ENCODE measurements at regions of chr10 and their contacts with region 1.

Region 1: DNA sequence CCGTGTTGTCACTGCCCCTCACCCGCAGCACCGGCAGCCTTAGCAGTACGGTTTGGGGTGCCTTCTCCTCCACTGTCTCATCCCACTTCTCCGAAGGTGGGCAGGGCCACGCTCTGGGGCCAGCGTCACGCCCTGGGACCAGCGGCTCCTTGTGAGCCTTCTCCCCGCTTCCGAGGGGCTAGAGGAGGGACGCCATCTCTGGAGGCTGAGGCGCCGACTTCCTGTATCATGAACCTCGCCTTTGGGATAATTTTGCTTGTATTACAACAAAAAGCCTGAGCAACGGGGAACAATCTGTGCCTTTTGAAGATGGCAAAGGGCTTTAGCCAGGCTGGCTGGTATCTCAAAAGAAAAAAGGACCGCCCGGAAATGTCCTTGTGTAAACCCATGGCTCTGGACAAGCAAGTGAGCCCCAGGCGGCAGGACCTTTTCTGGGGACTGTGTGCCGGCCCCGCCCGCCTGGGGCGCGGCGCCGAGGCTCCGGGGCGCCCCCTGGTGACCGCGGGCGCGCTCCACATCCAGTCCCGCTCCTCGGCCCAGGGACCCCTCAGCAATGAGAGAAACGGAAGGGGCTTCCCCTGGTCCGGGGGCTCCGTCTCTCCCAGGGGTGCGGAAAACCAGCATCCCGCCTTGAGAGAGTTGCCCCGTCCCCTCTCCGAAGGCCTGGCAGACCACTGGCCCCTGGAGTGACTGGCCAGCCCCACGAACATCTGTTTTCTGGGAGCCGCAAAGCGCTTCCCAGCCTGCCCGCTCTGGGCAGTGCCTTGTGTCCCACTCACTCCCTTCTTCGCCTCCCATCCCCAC is 3.8 kb downstream of the DEPP1 start:
- DNase-seq: peak; percentile 63
- H3K4me3 Mint-ChIP-seq: peak overlapping the region; percentile 64
- H3K27ac Mint-ChIP-seq: peak overlapping the region; percentile 80
- H3K4me1 Mint-ChIP-seq: peaks cover 15% of the 10 kb centered on the region
- H3K27me3 Mint-ChIP-seq: no peaks in the 10 kb centered on the region

Region 2: DNA sequence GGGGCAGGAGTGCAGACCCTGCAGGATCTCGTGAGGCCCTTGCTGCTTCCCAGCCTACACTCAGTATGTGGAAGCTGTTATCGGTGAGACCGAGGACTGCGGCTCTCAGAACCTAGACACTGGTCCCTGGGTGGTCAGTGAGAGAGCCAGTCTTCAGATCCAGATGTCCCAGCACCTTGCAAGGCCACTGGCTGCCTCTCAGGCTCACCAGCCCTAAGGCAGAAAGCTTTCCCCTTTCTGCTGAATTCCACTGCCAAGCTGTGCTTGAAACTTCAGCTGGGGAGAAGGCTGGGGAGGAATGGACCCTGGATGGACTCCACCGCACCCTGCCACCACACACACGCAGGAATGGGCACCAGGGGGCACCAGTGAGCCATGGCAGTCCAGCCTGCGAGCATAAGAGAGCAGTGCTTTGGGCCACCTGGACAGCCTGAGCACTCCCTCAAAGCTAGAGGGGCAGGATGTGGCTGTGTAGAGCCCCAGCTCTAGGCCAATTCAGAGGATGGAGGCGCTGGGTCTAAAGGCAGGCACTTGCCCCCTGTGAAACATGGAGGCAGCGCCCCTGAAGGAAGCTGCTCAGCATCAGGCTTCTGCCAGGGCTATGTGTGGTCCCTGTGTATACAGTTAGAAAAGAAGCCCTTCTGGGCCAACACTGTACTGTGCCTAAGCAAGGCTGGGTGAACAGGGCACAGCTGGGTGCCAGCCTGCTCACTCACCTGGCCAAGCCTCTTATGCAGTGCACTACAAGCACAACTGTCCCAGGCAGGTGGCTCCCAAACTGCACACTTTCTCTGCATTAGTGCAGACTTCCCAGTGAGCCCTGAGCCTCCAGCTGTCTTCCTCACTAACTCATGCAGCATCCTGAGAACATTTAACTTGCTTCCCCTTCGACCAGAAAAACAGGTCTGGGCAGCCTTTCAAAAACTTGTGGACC is 42.0 kb before region 1 on chr10:
- intact Hi-C with region 1: loop called (anchors 1 kb)
- DNase-seq: peak; percentile 74
- H3K4me3 Mint-ChIP-seq: no peak overlapping the region
- H3K27ac Mint-ChIP-seq: no peak overlapping the region
- H3K4me1 Mint-ChIP-seq: peaks cover 8% of the 10 kb centered on the region
- H3K27me3 Mint-ChIP-seq: no peaks in the 10 kb centered on the region

Region 3: DNA sequence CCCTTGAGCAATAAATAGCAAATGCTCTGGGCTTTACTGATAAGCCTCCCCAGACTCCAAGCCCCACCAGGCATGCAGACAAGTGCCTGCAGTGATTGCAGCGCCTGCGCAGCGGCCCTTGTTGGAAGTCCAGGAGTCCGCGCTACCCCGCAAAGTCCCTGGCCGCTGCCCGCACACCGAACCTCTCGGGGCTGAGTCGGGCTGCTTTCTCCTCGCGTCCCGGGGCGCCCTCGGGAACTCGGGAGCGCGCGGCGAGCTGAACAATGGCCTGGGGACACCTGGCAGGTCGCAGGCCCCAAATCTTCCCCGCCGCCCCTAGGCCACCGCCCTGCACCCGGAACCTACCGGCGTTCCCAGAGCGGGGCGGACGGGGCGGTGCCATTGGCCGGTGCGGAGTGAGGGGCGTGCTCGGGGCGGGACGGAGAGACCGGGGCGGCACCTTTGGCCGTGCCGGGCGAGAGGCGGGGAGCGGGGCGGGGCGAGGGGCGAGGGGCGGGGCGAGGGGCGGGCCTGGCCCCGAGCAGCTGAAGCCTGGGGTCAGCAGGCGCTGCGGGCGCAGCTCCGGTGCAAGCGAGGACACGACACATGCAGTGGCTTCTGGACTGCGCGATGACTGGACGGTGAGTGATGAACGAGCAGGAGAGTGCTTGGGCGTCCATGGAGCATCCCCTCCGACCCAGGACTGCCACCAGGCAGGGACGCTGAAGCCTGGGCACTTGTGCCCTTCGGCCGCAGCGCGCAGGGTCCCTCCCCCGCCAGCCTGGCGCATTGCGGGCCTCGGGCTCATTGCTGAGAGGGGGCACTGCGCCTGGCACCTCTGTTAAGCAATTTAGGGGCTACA is 15.4 kb before region 1 on chr10 and contains the start of gene RASSF4:
- intact Hi-C with region 1: loop called (anchors 2 kb)
- DNase-seq: peak; percentile 89
- H3K4me3 Mint-ChIP-seq: peak within 1 kb of the TSS; percentile 85
- H3K27ac Mint-ChIP-seq: peak within 1 kb of the TSS; percentile 63
- H3K4me1 Mint-ChIP-seq: peaks cover 10% of the 10 kb centered on the region
- H3K27me3 Mint-ChIP-seq: no peaks in the 10 kb centered on the region
- total RNA-seq, gene RASSF4: 0.66 and 1.7 TPM in 2 replicates

Measured in activated T-helper 2 cell treated with anti-CD3 and anti-CD28 coated beads, Interferon-gamma antibody, Interleukin-2, Interleukin-4, amounts not matched to agents 10 μg/mL and 5 μg/mL and 100 μg/mL, durations not matched to agents 14 hours and 24 hours and 36 hours (primary cell).